Posterior cingulate gyrus (tissue), 11 donors: ENCODE measurements at regions of chr10 and their contacts with region 1.

Region 1: DNA sequence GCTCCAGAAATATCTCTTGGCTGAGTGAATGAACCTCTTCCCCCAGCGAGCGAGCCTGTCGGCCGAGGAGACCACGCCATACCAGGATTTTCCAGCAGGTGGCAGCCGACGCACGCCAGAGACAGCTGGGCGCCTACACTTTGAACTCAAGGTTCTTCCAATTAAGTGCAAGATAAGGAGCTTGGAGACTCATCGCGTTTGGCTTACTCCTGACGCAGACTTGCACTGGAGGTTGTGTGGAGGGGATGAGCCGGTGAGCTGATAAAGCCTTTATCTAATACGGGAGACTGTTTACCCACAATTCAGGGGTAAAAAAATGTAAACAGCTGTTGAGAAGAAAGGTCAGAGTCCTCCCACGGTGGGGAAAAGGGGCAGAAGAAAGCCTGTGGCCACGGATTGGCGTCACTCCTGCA is 45.9 kb upstream of the EMX2 start:
- DNase-seq: peak; percentile 54 to 96 (median 76)

Region 2: DNA sequence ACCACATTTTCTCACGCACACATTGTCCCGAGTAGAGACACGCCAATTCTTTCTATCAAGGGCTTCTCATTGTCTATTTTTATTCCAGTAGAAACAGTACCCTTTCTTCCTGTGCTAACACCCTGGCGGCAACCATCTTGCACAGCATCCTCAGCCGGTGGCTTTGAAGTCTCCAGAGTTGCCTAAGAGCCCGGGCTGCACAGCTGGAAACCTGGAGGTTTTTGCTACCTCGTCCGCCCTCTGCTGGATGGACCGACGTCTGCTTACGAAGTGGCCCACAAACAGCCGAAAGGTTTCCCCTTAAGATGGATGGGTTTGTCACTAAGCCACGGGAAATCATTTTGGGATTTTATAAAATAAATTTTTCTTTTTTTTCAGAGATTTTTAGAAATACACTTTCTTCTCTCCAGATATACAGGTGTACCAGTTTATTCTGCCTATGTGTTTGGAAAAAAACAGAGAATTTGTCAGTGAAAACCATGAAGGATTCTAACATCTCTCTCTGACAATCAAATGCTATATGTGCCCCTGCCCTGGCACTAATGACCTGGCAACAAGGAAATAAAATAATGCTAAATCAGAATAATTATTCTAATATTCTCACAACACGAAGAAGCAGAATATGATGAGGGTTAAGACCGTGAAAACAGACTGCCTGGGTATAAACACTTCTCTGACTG is 927.3 kb after region 1 on chr10:
- intact Hi-C with region 1: loop called (anchors 10 kb)
- DNase-seq: peak; percentile 44 to 95 (median 67)

Region 3: DNA sequence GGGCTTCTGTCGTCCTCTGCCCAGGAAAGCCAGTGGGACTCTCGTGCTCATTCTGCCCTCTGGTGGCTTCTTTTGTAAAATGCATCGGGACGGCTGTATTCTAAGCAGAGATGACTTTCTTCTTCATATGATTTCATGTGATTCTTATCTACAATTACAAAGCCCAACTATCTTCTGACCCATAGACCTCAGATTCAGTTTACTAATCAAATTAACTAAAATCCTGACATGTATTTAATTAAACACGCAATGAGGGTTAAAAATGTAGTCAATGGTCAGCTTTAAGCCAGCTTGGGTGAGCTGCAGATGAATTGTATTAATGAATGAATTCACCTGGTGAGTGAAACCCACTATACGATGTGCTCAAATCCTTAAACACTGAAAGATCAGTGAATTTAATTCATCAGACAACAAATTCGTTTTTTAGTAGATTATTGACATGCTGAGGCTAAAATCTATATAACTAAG is 963.1 kb after region 1 on chr10:
- intact Hi-C with region 1: loop called (anchors 2 kb)
- DNase-seq: peak; percentile 35 to 92 (median 67)